ENCODE measurements at regions of chr14 and their contacts with region 1.

Region 1: DNA sequence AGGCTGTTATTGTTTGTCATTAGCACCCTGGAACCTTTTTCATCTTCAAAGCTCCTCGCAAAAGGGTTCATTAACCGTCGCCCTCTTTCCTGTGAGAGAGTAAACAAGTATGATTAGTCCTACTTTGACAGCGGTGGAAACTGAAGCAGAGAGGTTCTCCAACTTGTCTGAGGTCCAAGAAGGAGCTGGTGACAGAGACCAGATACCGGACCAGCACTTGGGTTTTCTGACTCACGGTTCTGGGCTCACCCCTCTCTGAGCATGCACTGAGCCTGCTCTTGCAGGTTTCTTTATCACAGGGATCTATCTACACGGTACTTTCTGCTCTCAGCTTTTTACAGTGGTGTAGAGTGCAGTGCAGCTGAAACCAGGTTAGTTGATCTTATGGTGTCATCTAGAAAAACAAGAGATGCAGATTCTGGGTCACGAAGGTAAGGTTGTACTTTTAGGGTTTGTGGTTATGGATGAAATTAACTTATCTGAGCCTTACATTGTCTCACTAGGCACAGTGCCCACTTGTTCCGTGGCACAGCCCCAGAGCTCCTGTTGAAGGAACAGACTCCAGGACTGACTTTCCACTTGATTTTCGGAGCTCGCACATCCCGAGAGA is 62.1 kb downstream of the PPP2R5C start:
- DNase-seq: peak; percentile 88
- ATAC-seq: peak; percentile 68
- H3K4me3 Mint-ChIP-seq: peak overlapping the region; percentile 71
- H3K27ac Mint-ChIP-seq: peak overlapping the region; percentile 99
- H3K4me1 Mint-ChIP-seq: peaks cover 80% of the 10 kb centered on the region
- H3K27me3 Mint-ChIP-seq: no peaks in the 10 kb centered on the region
- CTCF ChIP-seq: no peak

Region 2: DNA sequence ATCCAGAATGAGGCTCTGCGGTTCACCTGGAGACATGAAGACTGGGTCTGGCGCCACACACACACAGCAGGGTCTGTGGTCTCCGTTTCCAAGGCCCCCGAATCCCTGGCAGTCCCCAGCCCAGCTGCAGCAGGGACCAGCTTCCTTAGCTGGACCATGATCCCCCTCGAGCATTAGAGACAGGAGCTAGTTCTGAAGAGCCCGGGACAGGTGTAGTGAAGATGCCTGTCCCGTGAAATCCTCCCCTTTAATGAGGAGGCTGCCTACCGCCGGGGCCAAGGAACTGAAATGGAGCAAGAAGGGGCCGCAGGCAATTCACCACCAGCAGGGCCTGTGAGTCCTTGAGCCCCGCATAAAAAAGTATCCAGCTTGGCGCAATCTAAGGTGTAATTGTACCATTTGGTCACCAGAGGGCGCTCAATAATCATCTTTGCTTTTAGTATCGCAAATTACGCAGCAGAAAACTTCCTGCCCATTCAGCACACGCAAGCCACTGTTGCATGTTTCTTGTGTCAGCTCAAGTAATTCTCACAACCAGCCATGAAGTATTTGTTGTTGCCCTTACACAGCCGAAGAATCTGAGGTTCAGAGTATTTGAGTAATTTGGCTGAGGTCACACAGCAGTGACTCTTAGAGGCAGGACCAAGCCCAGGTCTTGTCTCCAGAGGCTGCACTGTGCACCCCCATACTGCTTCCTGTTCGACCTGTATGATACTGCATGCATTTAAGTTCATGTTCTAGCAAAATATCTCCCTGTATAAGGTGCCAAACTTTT is 116.4 kb before region 1 on chr14:
- CTCF ChIA-PET with region 1: interaction called, 6 read pairs
- POLR2A ChIA-PET with region 1: interaction called, 15 read pairs
- intact Hi-C with region 1: no loop called
- DNase-seq: peak; percentile 73
- ATAC-seq: peak; percentile 71
- H3K4me3 Mint-ChIP-seq: peak overlapping the region; percentile 32
- H3K27ac Mint-ChIP-seq: peak overlapping the region; percentile 83
- H3K4me1 Mint-ChIP-seq: peaks cover 32% of the 10 kb centered on the region
- H3K27me3 Mint-ChIP-seq: no peaks in the 10 kb centered on the region
- CTCF ChIP-seq: peak; percentile 95

Region 3: GRCh38 chr14:101740981-101741380 is 82.6 kb before region 1 on chr14:
- CTCF ChIA-PET with region 1: no interaction called
- POLR2A ChIA-PET with region 1: no interaction called
- intact Hi-C with region 1: no loop called
- DNase-seq: no peak
- ATAC-seq: no peak
- H3K4me3 Mint-ChIP-seq: no peak overlapping the region
- H3K27ac Mint-ChIP-seq: no peak overlapping the region
- H3K4me1 Mint-ChIP-seq: peaks cover 13% of the 10 kb centered on the region
- H3K27me3 Mint-ChIP-seq: no peaks in the 10 kb centered on the region
- CTCF ChIP-seq: no peak

Region 4: GRCh38 chr14:101761032-101761880 is 62.4 kb before region 1 on chr14 and contains the start of gene PPP2R5C:
- CTCF ChIA-PET with region 1: interaction called, 4 read pairs
- POLR2A ChIA-PET with region 1: interaction called, 7 read pairs
- intact Hi-C with region 1: loop called (anchors 5 kb)
- DNase-seq: peak; percentile 91
- ATAC-seq: peak; percentile 66
- H3K4me3 Mint-ChIP-seq: peak within 1 kb of the TSS; percentile 84
- H3K27ac Mint-ChIP-seq: peak within 1 kb of the TSS; percentile 80
- H3K4me1 Mint-ChIP-seq: peaks cover 34% of the 10 kb centered on the region
- H3K27me3 Mint-ChIP-seq: no peaks in the 10 kb centered on the region
- CTCF ChIP-seq: no peak
- total RNA-seq, gene PPP2R5C: 238 to 242 TPM

Region 5: DNA sequence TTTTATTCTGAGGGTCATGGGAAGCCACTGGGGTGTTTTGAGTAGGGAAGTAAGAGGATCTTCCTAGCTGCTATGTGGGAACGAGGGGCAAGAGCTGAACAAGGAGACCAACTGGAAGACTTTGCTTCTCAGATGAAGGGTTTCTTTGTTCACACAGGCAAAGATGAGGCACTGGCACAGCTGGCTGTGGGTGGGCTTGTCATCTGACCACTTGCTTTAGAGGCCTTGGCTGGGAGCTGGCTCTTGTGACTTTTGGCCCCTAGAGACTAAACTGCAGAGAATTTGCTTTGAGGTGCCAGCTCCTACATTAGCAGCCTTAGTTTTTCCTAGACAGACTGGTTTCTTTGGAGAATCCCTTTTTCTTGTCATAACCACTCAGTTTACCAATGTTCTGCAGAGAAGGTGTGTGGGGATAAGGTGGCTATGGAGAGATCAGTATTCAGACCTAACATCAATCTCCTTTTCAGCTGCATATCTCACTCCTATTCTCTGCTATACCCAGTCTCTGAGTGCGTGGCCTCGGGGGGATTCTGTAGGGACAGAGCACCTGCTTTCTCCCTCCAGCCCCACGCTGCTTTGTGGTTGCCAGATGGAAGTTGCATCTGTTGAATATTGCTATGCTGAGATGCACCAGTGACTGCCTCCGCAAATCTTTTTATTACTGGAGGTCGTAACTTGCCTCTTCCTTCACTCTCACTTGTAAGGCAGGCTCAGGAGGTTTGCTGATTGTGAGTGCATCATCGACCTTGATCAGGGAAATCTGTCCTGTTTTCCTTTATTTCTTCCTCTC is 49.4 kb before region 1 on chr14:
- CTCF ChIA-PET with region 1: interaction called, 29 read pairs
- POLR2A ChIA-PET with region 1: interaction called, 17 read pairs
- intact Hi-C with region 1: no loop called
- DNase-seq: no peak
- ATAC-seq: no peak
- H3K4me3 Mint-ChIP-seq: no peak overlapping the region
- H3K27ac Mint-ChIP-seq: peak overlapping the region; percentile 12
- H3K4me1 Mint-ChIP-seq: peaks cover 25% of the 10 kb centered on the region
- H3K27me3 Mint-ChIP-seq: peaks cover 1% of the 10 kb centered on the region
- CTCF ChIP-seq: no peak

Region 6: GRCh38 chr14:101834800-101835547 is 11.4 kb after region 1 on chr14:
- CTCF ChIA-PET with region 1: interaction called, 5 read pairs
- POLR2A ChIA-PET with region 1: interaction called, 79 read pairs
- intact Hi-C with region 1: no loop called
- DNase-seq: no peak
- ATAC-seq: no peak
- H3K4me3 Mint-ChIP-seq: no peak overlapping the region
- H3K27ac Mint-ChIP-seq: peak overlapping the region; percentile 80
- H3K4me1 Mint-ChIP-seq: peaks cover 85% of the 10 kb centered on the region
- H3K27me3 Mint-ChIP-seq: no peaks in the 10 kb centered on the region
- CTCF ChIP-seq: no peak

Region 7: DNA sequence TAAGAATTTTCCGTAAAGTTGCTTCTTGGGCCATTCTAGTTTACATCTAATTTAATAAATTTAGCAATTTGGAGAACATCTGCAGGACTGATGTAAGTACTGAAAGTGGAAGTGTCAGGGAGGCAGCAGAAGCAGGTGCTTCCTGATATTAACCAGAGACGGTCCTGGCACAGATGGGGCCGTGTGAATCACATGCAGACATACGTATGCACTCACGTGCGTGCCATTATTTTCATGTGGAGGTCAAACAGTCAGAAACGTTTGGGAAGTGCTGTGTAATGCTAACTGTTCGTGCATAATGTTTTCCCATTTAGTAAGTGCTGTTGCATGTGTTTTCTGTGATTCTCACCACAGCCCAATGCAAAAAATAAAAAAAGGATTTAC is 52.9 kb after region 1 on chr14:
- CTCF ChIA-PET with region 1: interaction called, 3 read pairs
- POLR2A ChIA-PET with region 1: interaction called, 53 read pairs
- intact Hi-C with region 1: loop called (anchors 5 kb)
- DNase-seq: peak; percentile 90
- ATAC-seq: peak; percentile 69
- H3K4me3 Mint-ChIP-seq: peak overlapping the region; percentile 55
- H3K27ac Mint-ChIP-seq: peak overlapping the region; percentile 92
- H3K4me1 Mint-ChIP-seq: peaks cover 84% of the 10 kb centered on the region
- H3K27me3 Mint-ChIP-seq: no peaks in the 10 kb centered on the region
- CTCF ChIP-seq: no peak

Measured in activated CD8-positive, alpha-beta T cell treated with anti-CD3 and anti-CD28 coated beads for 36 hours (primary cell).